Heart right ventricle (tissue), 16 donors: ENCODE measurements at regions of chrX and their contacts with region 1.

Region 1: DNA sequence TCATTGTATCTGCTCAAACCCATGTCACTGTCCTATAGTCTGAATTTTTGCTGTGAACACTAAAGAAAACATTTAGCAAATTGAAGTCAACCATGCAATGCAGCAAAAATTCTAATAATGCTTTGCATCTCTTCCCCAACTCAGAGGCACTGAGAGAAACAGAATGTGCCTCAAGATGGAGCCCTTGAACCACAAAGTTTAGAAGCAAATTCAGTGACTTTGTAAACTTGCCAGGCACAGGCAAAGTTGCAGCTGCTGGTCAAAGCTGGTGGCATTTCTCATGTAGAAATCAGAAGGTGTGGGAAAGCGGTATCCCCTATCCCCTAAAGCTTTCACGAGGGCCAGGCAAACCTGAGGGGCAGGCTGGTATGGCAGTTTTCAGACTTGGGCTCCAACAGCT is 121.7 kb upstream of the DIPK2B start:
- DNase-seq: peak in 1 of 2 donors; percentile 23
- ATAC-seq: peak in 1 of 8 donors; percentile 44
- H3K4me3 ChIP-seq: no peak overlapping the region
- H3K27ac ChIP-seq: no peak overlapping the region
- H3K4me1 ChIP-seq: no peaks in the 10 kb centered on the region
- H3K27me3 ChIP-seq: peaks cover 0 to 35% (median 0%) of the 10 kb centered on the region in 7 donors
- CTCF ChIP-seq: peak in 8 of 9 donors; percentile 17 to 54 (median 50)

Region 2: DNA sequence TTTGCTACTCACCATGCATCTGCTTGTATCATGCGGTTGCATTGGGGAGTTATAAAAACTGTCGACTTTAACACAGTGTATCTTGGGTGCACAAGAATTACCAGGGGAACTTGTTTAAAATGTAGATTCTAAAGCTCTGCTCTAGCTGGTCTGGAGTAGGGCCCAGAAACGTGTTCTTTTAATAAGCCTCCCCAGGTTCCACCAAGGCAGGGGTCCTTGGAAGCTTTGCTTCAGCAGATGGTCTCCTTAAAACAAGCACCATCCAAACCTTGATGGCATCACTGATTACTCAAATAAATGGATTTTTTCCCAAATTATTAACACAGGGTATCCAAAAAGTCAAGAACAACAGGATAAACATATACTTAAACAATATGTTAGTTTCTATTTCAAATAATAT is 1229.0 kb before region 1 on chrX:
- intact Hi-C with region 1: no loop called
- DNase-seq: no peak
- ATAC-seq: no peak
- H3K4me3 ChIP-seq: no peak overlapping the region
- H3K27ac ChIP-seq: no peak overlapping the region
- H3K4me1 ChIP-seq: no peaks in the 10 kb centered on the region
- H3K27me3 ChIP-seq: peaks cover 0 to 22% (median 0%) of the 10 kb centered on the region in 7 donors
- CTCF ChIP-seq: no peak

Region 3: GRCh38 chrX:45554736-45555135 is 232.4 kb after region 1 on chrX:
- intact Hi-C with region 1: no loop called
- DNase-seq: no peak
- ATAC-seq: no peak
- H3K4me3 ChIP-seq: no peak overlapping the region
- H3K27ac ChIP-seq: no peak overlapping the region
- H3K4me1 ChIP-seq: no peaks in the 10 kb centered on the region
- H3K27me3 ChIP-seq: peaks cover 0 to 50% (median 0%) of the 10 kb centered on the region in 7 donors
- CTCF ChIP-seq: no peak

Region 4: DNA sequence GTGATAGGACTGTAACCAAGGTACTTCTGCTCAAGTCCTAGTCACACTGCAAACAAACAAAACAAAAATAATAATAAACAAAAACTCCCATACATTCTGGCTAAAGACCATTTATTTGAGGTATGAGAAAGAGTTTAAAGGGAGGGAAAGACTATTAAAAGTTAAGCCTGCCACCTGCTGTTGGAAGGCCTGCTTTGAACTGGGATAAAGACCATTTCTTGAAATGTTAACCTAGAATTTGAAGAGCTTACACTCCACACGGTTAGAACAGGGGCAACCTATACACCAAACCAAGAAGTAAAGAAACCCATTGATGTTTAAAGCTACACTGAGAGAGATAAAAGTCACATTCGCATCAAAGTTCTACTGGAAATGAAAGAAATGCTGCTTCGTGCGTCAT is 427.0 kb after region 1 on chrX:
- intact Hi-C with region 1: loop called in 3 of 10 experiments (anchors 5 kb)
- DNase-seq: no peak
- ATAC-seq: peak in 3 of 8 donors; percentile 38 to 60 (median 58)
- H3K4me3 ChIP-seq: peak overlapping the region in 7 of 10 donors; percentile 14 to 46 (median 33)
- H3K27ac ChIP-seq: peak overlapping the region in 6 of 10 donors; percentile 11 to 72 (median 63)
- H3K4me1 ChIP-seq: peaks cover 0 to 32% (median 8%) of the 10 kb centered on the region in 9 donors
- H3K27me3 ChIP-seq: peaks cover 0 to 45% (median 0%) of the 10 kb centered on the region in 7 donors
- CTCF ChIP-seq: peak in 6 of 9 donors; percentile 23 to 47 (median 42)

Region 5: GRCh38 chrX:45849253-45849862 is 527.0 kb after region 1 on chrX:
- intact Hi-C with region 1: loop called in 1 of 10 experiments (anchors 10 kb)
- DNase-seq: peak in 1 of 2 donors; percentile 2
- ATAC-seq: no peak
- H3K4me3 ChIP-seq: peak overlapping the region in 2 of 10 donors; percentile 5 to 12
- H3K27ac ChIP-seq: no peak overlapping the region
- H3K4me1 ChIP-seq: peaks cover 0 to 5% (median 0%) of the 10 kb centered on the region in 9 donors
- H3K27me3 ChIP-seq: peaks cover 0 to 87% (median 0%) of the 10 kb centered on the region in 7 donors
- CTCF ChIP-seq: peak in 7 of 9 donors; percentile 8 to 49 (median 40)

Region 6: DNA sequence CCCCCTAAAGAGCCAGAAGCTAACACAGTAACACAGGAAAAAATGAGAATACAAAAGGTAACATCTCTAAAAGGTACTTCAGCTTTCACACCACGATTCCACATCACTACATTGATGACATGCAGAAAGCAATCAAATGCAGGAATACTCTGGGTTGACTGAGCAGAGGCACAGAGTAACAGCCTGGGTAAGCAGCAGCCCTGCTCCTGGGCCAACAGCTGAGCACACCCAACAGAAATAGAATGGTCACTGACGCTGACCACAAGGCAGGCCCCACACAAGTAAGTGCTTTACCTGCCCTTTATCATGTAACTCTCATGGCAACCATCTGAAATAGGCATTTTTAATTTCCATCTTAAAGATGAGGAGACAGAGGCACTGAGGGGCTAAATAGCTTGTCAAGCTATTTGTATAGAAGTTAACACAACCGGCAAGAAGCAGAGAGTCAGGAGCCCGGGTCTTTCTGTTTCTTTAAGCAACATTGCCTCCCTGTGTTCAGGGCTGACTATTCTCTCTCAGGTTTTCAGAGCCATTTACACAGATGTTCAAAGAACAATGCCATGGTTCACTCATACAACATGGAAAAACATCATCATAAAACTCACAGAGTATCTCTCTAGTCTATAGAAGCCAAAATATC is 1054.0 kb after region 1 on chrX:
- intact Hi-C with region 1: loop called in 2 of 10 experiments (anchors 5 kb)
- DNase-seq: no peak
- ATAC-seq: peak in 7 of 8 donors; percentile 38 to 79 (median 68)
- H3K4me3 ChIP-seq: no peak overlapping the region
- H3K27ac ChIP-seq: no peak overlapping the region
- H3K4me1 ChIP-seq: no peaks in the 10 kb centered on the region
- H3K27me3 ChIP-seq: peaks cover 0 to 9% (median 0%) of the 10 kb centered on the region in 7 donors
- CTCF ChIP-seq: peak in 6 of 9 donors; percentile 29 to 47 (median 38)

Region 7: GRCh38 chrX:46408553-46409407 is 1086.4 kb after region 1 on chrX:
- intact Hi-C with region 1: loop called in 5 of 10 experiments (anchors 10 kb)
- DNase-seq: peak; percentile 54 to 59
- ATAC-seq: no peak
- H3K4me3 ChIP-seq: no peak overlapping the region
- H3K27ac ChIP-seq: no peak overlapping the region
- H3K4me1 ChIP-seq: no peaks in the 10 kb centered on the region
- H3K27me3 ChIP-seq: peaks cover 0 to 24% (median 0%) of the 10 kb centered on the region in 7 donors
- CTCF ChIP-seq: peak; percentile 36 to 89 (median 69)